AG04450 (cell line): ENCODE measurements at regions of chr6 and their contacts with region 1.

Region 1: GRCh38 chr6:32092760-32093497 is 16.2 kb downstream of the TNXB start:
- DNase-seq: peak; percentile 74
- H3K4me3 ChIP-seq: no peak overlapping the region
- H3K27ac ChIP-seq: peak overlapping the region; percentile 80
- H3K27me3 ChIP-seq: peaks cover 69% of the 10 kb centered on the region
- CTCF ChIP-seq: no peak

Region 2: GRCh38 chr6:32076321-32076809 is 16.6 kb before region 1 on chr6:
- CTCF ChIA-PET with region 1: no interaction called
- POLR2A ChIA-PET with region 1: interaction called, 16 read pairs
- DNase-seq: peak; percentile 51
- H3K4me3 ChIP-seq: no peak overlapping the region
- H3K27ac ChIP-seq: no peak overlapping the region
- H3K27me3 ChIP-seq: peaks cover 11% of the 10 kb centered on the region
- CTCF ChIP-seq: no peak

Region 3: GRCh38 chr6:32113386-32114352 is 20.7 kb after region 1 on chr6:
- CTCF ChIA-PET with region 1: interaction called, 11 read pairs
- POLR2A ChIA-PET with region 1: interaction called, 13 read pairs
- DNase-seq: peak; percentile 81
- H3K4me3 ChIP-seq: no peak overlapping the region
- H3K27ac ChIP-seq: peak overlapping the region; percentile 39
- H3K27me3 ChIP-seq: peaks cover 12% of the 10 kb centered on the region
- CTCF ChIP-seq: peak; percentile 60

Region 4: DNA sequence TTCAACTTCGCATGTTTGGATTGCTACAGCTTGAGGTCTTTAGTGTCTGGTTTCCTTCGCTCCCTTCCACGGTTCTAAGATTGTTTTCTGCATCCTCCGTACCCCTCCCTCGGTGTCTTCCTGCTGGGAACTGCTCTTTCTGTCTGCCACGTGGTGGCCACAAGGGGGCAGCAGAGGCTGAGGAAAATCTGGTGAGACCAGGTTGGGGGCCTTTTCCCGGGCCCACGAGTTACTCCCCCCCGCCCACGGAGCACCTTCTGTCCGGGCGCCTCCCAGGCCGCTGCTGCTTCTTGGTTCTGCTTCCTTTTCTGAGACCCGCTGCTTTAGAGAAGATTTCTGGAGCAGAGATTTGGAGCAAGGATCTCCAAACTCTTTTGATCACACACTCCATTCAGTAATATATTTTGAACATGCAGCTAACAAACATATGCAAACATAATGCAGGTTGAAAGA is 152.0 kb after region 1 on chr6:
- CTCF ChIA-PET with region 1: no interaction called
- POLR2A ChIA-PET with region 1: no interaction called
- DNase-seq: peak; percentile 39
- H3K4me3 ChIP-seq: no peak overlapping the region
- H3K27ac ChIP-seq: no peak overlapping the region
- H3K27me3 ChIP-seq: peaks cover 24% of the 10 kb centered on the region
- CTCF ChIP-seq: peak; percentile 82